Activated T-helper 1 cell treated with anti-CD3 and anti-CD28 coated beads, Interleukin-12 subunit alpha, Interleukin-12 subunit beta, Interleukin-2, Interleukin-4 antibody, amounts not matched to agents 30 ng/mL and 10 ng/mL and 1 ng/mL, durations not matched to agents 14 hours and 24 hours and 36 hours (primary cell): ENCODE measurements at regions of chr11 and their contacts with region 1.

Region 1: DNA sequence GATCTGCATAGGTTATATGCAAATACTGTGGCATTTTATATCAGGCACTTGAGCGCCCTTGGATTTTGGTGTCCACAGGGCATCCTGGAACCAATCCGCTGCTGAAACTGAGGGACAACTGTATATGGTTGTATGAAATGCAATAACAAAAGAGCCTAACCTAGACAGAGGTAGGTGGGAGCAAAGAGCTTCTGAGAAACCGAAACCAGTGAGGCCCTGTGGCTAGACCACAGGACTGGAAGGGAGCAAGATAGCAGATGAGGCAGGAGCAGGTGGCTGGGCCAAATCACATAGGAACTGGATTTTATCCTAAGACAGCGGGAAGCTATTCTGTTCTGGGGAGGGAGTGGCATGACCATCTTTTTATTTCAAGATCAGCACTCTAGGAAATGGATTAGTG is 30.1 kb downstream of the RCN1 start:
- DNase-seq: no peak
- H3K4me3 Mint-ChIP-seq: no peak overlapping the region
- H3K27ac Mint-ChIP-seq: peak overlapping the region; percentile 53
- H3K4me1 Mint-ChIP-seq: peaks cover 22% of the 10 kb centered on the region
- H3K27me3 Mint-ChIP-seq: peaks cover 22% of the 10 kb centered on the region

Region 2: GRCh38 chr11:31887180-31887579 is 233.8 kb before region 1 on chr11:
- intact Hi-C with region 1: no loop called
- DNase-seq: no peak
- H3K4me3 Mint-ChIP-seq: no peak overlapping the region
- H3K27ac Mint-ChIP-seq: no peak overlapping the region
- H3K4me1 Mint-ChIP-seq: no peaks in the 10 kb centered on the region
- H3K27me3 Mint-ChIP-seq: no peaks in the 10 kb centered on the region

Region 3: GRCh38 chr11:31968461-31969358 is 152.3 kb before region 1 on chr11:
- intact Hi-C with region 1: no loop called
- DNase-seq: no peak
- H3K4me3 Mint-ChIP-seq: no peak overlapping the region
- H3K27ac Mint-ChIP-seq: no peak overlapping the region
- H3K4me1 Mint-ChIP-seq: no peaks in the 10 kb centered on the region
- H3K27me3 Mint-ChIP-seq: peaks cover 2% of the 10 kb centered on the region

Region 4: GRCh38 chr11:32052218-32052617 is 68.8 kb before region 1 on chr11:
- intact Hi-C with region 1: loop called (anchors 10 kb)
- DNase-seq: peak; percentile 28
- H3K4me3 Mint-ChIP-seq: no peak overlapping the region
- H3K27ac Mint-ChIP-seq: no peak overlapping the region
- H3K4me1 Mint-ChIP-seq: no peaks in the 10 kb centered on the region
- H3K27me3 Mint-ChIP-seq: peaks cover 21% of the 10 kb centered on the region

Region 5: GRCh38 chr11:32105871-32106560 is 15.0 kb before region 1 on chr11:
- intact Hi-C with region 1: no loop called
- DNase-seq: no peak
- H3K4me3 Mint-ChIP-seq: no peak overlapping the region
- H3K27ac Mint-ChIP-seq: no peak overlapping the region
- H3K4me1 Mint-ChIP-seq: peaks cover 7% of the 10 kb centered on the region
- H3K27me3 Mint-ChIP-seq: no peaks in the 10 kb centered on the region

Region 6: GRCh38 chr11:32162351-32162750 is 41.3 kb after region 1 on chr11:
- intact Hi-C with region 1: no loop called
- DNase-seq: no peak
- H3K4me3 Mint-ChIP-seq: no peak overlapping the region
- H3K27ac Mint-ChIP-seq: no peak overlapping the region
- H3K4me1 Mint-ChIP-seq: no peaks in the 10 kb centered on the region
- H3K27me3 Mint-ChIP-seq: peaks cover 11% of the 10 kb centered on the region